GM13976 (cell line): ENCODE measurements at regions of chr9 and their contacts with region 1.

Region 1: DNA sequence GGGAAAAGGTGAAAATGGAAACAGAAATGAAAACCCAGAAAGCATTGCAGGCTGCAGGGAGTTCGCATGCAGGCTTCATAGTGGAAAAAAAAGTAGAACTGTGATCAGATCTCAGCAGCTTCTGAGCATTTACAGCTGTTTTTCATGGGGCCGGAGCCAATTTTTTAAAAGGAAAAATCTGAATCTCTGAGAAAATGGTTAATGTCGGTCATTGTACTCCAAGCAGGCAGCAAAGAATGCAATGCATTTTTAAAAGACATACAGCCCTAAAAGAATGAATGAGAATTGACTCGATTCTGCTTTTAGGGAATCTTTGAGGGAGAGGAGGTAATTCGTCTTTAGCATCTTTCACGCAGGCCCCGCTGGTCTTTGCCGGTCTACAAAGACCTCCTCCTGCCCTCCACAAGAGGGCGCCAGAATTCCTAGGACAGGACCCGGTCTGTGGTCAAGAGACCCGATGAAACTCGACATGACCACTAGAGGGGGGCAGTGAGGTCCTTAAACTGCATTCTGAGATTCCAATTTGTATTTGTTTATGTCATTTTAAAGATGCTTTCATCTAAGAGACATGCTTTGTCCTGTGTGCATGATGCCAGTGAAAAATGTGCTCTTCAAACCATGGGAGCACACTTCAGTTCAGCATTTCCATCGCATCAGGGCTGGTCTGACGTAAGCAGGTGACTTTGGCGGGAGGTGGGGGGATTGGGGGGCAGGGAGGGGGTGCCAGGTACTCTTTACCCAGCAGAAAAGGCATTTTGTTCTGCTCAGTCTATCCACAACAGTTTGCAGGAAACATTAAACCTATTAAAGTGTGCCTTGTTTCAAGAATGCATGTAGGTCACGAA is 43.7 kb upstream of the TMEM252 start:
- DNase-seq: peak; percentile 81
- CTCF ChIP-seq: peak; percentile 94

Region 2: GRCh38 chr9:68685770-68686169 is 101.4 kb after region 1 on chr9:
- in situ Hi-C with region 1: loop called (anchors 10 kb)
- DNase-seq: peak; percentile 48
- CTCF ChIP-seq: peak; percentile 72

Region 3: DNA sequence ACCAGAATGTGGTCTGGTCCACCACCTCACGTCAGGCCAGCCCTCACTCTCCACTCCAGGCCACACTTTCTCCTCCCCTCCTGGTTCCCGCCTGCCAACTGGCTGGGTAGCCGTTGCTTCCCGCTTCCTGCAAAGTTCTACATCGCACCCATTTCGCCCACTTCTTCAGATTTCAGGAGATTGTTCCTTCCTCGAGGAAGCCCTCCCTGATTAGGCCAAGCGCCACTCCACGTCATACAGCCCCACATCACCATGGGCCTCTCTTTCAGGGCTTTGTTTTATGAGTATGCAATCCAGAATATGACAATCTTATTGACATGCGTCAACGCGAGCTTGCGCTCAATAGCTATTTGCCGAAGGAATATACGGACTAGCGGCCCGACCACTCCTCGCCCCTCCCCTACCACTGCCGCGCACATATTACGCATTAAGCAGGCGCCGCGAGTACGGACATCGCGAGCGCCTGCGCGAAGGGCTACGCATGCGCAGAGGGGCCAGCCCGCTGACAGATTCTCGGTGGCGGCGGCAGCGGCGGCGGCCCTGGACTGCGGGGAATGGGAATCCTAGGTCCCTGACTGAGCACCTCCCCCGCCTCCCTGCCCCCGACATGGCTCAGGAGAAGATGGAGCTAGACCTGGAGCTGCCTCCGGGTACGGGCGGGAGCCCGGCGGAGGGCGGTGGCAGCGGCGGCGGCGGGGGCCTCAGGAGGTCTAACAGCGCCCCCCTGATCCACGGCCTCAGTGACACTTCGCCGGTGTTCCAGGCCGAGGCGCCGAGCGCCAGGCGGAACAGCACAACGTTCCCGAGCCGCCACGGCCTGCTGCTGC is 195.4 kb after region 1 on chr9:
- in situ Hi-C with region 1: loop called (anchors 25 kb)
- DNase-seq: peak; percentile 90
- CTCF ChIP-seq: peak; percentile 68

Region 4: DNA sequence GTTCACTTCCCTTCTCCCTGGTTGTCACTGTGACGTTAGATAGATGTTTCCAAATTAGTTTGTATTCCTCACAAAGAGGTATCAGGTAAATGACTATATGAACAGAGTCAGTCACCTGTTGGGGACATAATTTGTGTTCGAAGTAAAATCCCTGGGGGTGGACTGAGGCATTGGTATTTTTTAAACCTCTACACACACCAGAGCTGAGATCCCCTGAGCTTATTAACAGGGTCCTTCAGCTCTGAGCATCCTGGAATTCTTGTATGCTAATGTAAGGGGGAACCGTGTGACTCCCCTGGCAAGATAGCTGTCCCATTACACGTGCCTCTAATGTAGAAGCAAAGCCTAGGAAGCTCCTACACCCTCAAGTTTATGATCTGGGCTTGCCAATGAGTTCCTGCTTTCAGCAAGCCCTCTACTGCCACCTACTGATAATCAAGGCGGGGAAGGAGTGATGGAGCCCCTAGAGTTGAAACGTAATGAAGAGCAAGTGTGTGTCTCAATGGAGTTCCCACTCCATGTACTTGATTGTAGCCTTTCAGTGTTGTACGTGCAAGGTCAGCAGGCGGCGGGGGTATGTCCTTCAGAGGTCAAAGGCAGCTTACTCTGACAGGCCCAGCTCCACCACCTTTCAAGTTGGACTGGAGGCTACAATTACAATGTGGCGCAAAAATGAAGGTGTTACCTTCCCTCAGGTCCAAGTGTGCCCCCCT is 415.1 kb after region 1 on chr9:
- in situ Hi-C with region 1: loop called (anchors 5 kb)
- DNase-seq: peak; percentile 72
- CTCF ChIP-seq: peak; percentile 83

Region 5: DNA sequence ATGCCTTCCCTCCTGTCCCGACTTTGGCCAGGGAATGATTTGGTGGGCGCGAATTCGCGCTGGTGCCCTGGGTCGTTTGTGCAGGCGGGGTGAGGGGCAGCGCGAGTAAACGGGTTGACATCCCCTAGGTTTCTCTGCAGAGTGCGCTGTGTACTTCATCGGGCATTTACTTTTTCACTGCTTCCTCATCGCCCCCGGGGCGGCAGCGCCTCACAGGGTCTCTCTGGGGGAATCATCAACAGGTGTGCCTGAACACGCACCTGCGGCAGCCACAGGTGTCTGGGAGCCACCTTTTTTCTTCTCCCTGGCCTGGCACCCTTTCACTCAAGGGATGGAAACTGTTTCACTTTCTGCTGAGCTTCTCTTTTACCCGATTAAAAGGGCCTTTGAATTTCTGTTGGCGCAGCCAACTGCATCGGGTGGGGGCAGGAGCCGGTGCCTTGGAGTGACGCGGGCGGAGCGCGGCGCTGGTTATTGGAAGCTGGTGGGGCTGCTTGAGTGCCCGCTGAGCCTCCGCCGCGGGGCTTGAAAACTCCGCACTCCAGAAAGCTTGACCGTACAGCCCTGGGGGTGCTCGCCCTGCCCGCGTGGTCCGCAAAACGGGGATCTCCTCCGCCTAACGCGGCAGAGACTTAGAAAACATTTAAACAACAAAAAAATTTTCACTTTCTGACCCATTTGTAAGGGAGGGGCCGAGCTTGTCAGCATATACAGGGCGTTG is 537.6 kb after region 1 on chr9:
- in situ Hi-C with region 1: loop called (anchors 25 kb)
- DNase-seq: peak; percentile 73
- CTCF ChIP-seq: no peak